ENCODE measurements at regions of chr12 and their contacts with region 1.

Region 1: GRCh38 chr12:14884458-14884878 is 1.2 kb downstream of the MGP start:
- DNase-seq: peak; percentile 57
- ATAC-seq: peak; percentile 96
- H3K4me3 Mint-ChIP-seq: peak overlapping the region; percentile 66
- H3K27ac Mint-ChIP-seq: peak overlapping the region; percentile 76
- H3K4me1 Mint-ChIP-seq: peaks cover 55% of the 10 kb centered on the region
- H3K27me3 Mint-ChIP-seq: peaks cover 25% of the 10 kb centered on the region
- CTCF ChIP-seq: no peak

Region 2: GRCh38 chr12:14920475-14921126 is 36.1 kb after region 1 on chr12:
- CTCF ChIA-PET with region 1: no interaction called
- POLR2A ChIA-PET with region 1: no interaction called
- intact Hi-C with region 1: loop called (anchors 5 kb)
- DNase-seq: no peak
- ATAC-seq: peak; percentile 75
- H3K4me3 Mint-ChIP-seq: no peak overlapping the region
- H3K27ac Mint-ChIP-seq: peak overlapping the region; percentile 76
- H3K4me1 Mint-ChIP-seq: peaks cover 17% of the 10 kb centered on the region
- H3K27me3 Mint-ChIP-seq: no peaks in the 10 kb centered on the region
- CTCF ChIP-seq: no peak

Measured in activated B cell treated with CpG ODN at 0.5 μM for 24 hours (primary cell).